ENCODE measurements at regions of chr3 and their contacts with region 1.

Region 1: DNA sequence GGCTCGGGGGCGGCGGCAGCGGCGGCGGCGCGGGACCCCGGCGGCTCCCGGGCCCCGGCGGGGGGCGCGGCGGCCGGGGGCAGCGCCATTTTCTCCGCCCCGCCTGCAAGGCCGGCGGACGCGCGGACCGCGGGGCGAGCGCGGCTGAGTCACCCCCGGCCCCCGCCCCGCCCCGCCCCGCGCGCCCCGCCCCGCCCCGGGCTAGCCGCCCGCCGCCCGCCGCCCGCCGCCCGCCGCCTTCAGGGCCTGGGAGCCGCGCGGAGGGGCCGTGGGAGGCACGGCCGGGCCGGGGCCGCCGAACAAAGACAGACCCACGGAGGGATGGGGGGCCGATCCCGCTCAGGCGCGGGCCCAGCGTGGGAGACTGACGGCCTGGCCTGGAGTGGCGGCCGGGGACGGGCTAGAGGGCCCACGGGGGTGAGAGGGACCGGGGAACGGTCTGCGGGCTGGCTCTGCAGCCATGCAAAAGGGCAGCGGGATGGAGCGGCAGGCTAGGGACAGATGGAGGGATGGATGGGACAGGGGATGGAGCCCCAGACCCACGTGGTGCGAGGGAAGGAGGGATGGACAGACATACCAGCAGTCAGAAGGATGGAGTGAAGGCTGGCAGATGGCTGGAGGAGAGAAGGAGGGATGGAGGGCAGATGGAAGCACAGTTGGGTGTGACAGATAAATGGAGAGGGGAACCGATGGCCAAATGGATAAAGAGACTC is at the start of gene EIF4E3:
- DNase-seq: peak; percentile 40
- H3K4me3 Mint-ChIP-seq: peak within 1 kb of the TSS; percentile 98
- H3K27ac Mint-ChIP-seq: peak within 1 kb of the TSS; percentile 96
- H3K4me1 Mint-ChIP-seq: peaks cover 66% of the 10 kb centered on the region
- H3K27me3 Mint-ChIP-seq: no peaks in the 10 kb centered on the region
- total RNA-seq, gene EIF4E3: 36.7 to 37.6 TPM

Region 2: DNA sequence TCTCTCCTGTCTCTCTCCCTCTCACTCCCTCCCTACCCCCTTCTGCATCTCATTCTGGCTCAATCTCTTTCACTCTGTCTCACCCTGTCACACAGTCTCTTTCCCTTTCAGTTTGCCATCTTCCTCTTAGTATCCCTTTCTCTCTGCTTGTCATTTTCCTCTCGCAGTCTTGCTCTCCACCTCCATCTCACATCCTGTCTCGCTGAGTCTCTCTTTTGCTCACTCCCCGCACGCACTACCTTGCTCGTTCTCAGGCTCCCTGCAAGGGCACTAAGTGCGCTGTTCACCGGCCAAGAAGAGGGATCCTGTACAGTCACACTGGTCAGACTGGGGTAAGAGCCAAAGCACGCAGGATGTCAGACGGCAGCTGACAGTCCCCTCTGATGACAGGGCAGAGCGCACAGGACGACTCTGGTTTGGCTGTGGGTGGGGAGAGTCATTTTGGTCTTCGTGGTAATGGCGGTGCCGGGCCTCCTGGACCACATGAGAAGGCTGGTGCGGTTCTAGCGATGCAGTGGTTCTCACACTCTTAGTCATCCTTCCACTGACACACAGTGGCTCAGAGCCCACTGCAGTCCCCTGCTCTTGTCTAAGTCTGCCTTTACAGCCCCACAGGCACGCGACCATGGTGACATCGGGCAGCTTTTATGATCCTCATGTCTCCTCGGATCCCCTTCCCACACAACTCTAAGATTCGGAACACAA is 498.7 kb before region 1 on chr3:
- CTCF ChIA-PET with region 1: no interaction called
- POLR2A ChIA-PET with region 1: no interaction called
- intact Hi-C with region 1: loop called (anchors 5 kb)
- DNase-seq: peak; percentile 96
- H3K4me3 Mint-ChIP-seq: peak overlapping the region; percentile 77
- H3K27ac Mint-ChIP-seq: peak overlapping the region; percentile 96
- H3K4me1 Mint-ChIP-seq: peaks cover 77% of the 10 kb centered on the region
- H3K27me3 Mint-ChIP-seq: no peaks in the 10 kb centered on the region

Region 3: GRCh38 chr3:71487418-71487817 is 238.0 kb before region 1 on chr3:
- CTCF ChIA-PET with region 1: no interaction called
- POLR2A ChIA-PET with region 1: no interaction called
- intact Hi-C with region 1: no loop called
- DNase-seq: no peak
- H3K4me3 Mint-ChIP-seq: peak overlapping the region; percentile 51
- H3K27ac Mint-ChIP-seq: peak overlapping the region; percentile 66
- H3K4me1 Mint-ChIP-seq: peaks cover 85% of the 10 kb centered on the region
- H3K27me3 Mint-ChIP-seq: no peaks in the 10 kb centered on the region

Region 4: DNA sequence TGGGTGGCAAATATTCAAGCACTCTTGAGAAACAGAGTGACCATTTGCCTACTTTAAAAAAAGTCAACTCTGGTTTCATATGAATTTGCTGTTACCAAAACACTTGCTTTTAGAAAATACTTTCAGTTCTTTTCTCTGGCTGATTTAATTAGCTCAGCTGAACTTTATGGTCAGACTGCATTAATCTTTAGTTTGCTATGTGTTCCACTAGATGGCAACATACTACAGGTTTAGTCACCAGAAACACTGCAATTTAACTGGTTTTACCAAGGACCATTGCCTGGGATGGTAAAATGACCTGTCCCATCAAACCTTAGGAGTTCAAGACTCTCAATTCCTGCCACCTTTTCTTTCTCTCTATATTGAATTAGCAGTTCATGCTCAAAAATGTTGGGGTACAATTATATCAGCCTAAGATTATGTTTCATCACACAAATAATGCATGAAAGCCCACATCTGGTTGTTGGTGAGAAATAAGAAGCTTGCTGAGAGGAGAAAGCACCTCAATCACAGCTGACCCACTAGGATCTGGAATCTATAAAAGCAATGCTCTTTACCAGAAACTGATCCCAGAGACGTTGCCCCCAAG is 14.4 kb before region 1 on chr3:
- CTCF ChIA-PET with region 1: interaction called, 47 read pairs
- POLR2A ChIA-PET with region 1: interaction called, 3 read pairs
- intact Hi-C with region 1: loop called (anchors 1 kb)
- DNase-seq: no peak
- H3K4me3 Mint-ChIP-seq: no peak overlapping the region
- H3K27ac Mint-ChIP-seq: no peak overlapping the region
- H3K4me1 Mint-ChIP-seq: peaks cover 70% of the 10 kb centered on the region
- H3K27me3 Mint-ChIP-seq: no peaks in the 10 kb centered on the region

Region 5: GRCh38 chr3:71875461-71875947 is 150.1 kb after region 1 on chr3:
- CTCF ChIA-PET with region 1: interaction called, 19 read pairs
- POLR2A ChIA-PET with region 1: no interaction called
- intact Hi-C with region 1: loop called (anchors 5 kb)
- DNase-seq: peak; percentile 90
- H3K4me3 Mint-ChIP-seq: no peak overlapping the region
- H3K27ac Mint-ChIP-seq: peak overlapping the region; percentile 71
- H3K4me1 Mint-ChIP-seq: peaks cover 37% of the 10 kb centered on the region
- H3K27me3 Mint-ChIP-seq: peaks cover 5% of the 10 kb centered on the region

Region 6: GRCh38 chr3:72339116-72340030 is 613.9 kb after region 1 on chr3:
- CTCF ChIA-PET with region 1: no interaction called
- POLR2A ChIA-PET with region 1: no interaction called
- intact Hi-C with region 1: loop called (anchors 10 kb)
- DNase-seq: no peak
- H3K4me3 Mint-ChIP-seq: no peak overlapping the region
- H3K27ac Mint-ChIP-seq: no peak overlapping the region
- H3K4me1 Mint-ChIP-seq: peaks cover 27% of the 10 kb centered on the region
- H3K27me3 Mint-ChIP-seq: no peaks in the 10 kb centered on the region

Region 7: GRCh38 chr3:72847751-72848702 is 1122.6 kb after region 1 on chr3 and contains the start of gene SHQ1:
- CTCF ChIA-PET with region 1: interaction called, 4 read pairs
- POLR2A ChIA-PET with region 1: interaction called, 3 read pairs
- intact Hi-C with region 1: loop called (anchors 5 kb)
- DNase-seq: peak; percentile 98
- H3K4me3 Mint-ChIP-seq: peak within 1 kb of the TSS; percentile 93
- H3K27ac Mint-ChIP-seq: peak within 1 kb of the TSS; percentile 47
- H3K4me1 Mint-ChIP-seq: peaks cover 48% of the 10 kb centered on the region
- H3K27me3 Mint-ChIP-seq: no peaks in the 10 kb centered on the region
- total RNA-seq, gene SHQ1: 27.9 to 30.1 TPM